ENCODE measurements at regions of chr20 and their contacts with region 1.

Region 1: GRCh38 chr20:2093159-2093781 is 8.4 kb upstream of the STK35 start:
- DNase-seq: peak; percentile 58
- H3K4me3 ChIP-seq: no peak overlapping the region
- H3K27ac ChIP-seq: no peak overlapping the region
- H3K4me1 ChIP-seq: peaks cover 5% of the 10 kb centered on the region
- CTCF ChIP-seq: peak; percentile 89

Region 2: DNA sequence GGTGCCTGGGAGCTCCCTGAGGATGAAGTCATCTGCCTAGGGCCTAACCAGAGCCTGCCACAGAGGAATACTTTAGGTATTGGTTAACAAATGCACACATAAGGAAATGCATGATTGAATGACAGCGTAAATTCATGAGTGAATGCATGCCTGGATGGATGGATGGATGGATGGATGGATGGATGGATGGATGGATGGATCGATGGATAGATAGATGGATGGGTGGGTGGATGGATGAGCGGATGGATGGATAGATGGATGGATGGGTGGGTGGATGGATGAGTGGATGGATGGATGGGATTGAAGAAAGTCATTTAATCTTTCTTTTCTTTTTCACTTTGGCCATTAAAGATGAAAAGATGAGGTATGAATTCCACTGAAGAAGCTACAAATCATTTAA is 323.8 kb before region 1 on chr20:
- CTCF ChIA-PET with region 1: no interaction called
- POLR2A ChIA-PET with region 1: no interaction called
- intact Hi-C with region 1: no loop called
- DNase-seq: no peak
- H3K4me3 ChIP-seq: no peak overlapping the region
- H3K27ac ChIP-seq: no peak overlapping the region
- H3K4me1 ChIP-seq: no peaks in the 10 kb centered on the region
- CTCF ChIP-seq: no peak

Region 3: GRCh38 chr20:1802385-1803060 is 290.7 kb before region 1 on chr20:
- CTCF ChIA-PET with region 1: no interaction called
- POLR2A ChIA-PET with region 1: no interaction called
- intact Hi-C with region 1: loop called (anchors 1 kb)
- DNase-seq: peak; percentile 52
- H3K4me3 ChIP-seq: no peak overlapping the region
- H3K27ac ChIP-seq: no peak overlapping the region
- H3K4me1 ChIP-seq: no peaks in the 10 kb centered on the region
- CTCF ChIP-seq: peak; percentile 85

Region 4: DNA sequence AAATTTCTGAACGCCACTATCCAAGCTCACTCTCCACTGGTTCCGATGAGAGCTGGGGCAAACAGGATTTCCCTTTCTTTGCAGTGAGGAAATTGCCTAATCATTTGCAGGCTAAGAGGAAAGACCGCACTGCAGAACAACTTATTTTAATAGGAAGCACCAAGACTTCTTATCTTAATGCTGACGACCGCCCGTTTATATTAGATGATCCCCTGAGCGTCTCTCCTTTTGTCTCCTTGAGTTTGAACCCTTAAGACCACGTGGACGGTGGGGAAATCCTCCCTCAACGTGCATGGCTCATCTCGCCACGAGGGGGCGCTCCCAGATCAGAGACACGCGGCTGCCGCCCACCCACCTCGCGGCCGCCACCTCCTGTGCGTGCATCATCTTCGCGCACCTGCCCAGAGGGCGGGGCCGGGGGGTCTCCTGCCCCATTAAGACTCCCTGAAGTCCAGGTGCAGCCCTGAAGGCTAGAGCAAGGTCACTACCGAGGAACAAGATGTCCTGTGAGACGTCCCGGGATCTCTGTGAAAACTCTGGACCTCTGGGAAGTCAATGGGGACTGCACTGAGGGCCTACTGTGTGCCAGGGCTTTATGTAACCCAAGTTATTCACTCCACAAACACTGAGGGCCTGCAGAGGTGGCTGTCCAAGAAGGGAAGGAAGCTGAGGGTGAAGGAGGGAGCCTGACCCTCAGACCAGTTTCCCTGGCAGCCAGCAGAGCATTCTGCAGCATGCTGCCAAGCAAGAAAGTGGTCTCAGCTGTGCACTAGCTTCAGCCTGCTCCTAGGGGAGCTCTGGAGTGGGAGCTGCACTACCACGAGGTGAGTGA is 127.5 kb before region 1 on chr20:
- CTCF ChIA-PET with region 1: no interaction called
- POLR2A ChIA-PET with region 1: no interaction called
- intact Hi-C with region 1: loop called (anchors 2 kb)
- DNase-seq: peak; percentile 86
- H3K4me3 ChIP-seq: no peak overlapping the region
- H3K27ac ChIP-seq: no peak overlapping the region
- H3K4me1 ChIP-seq: peaks cover 8% of the 10 kb centered on the region
- CTCF ChIP-seq: peak; percentile 98

Region 5: GRCh38 chr20:2005831-2006426 is 87.3 kb before region 1 on chr20:
- CTCF ChIA-PET with region 1: interaction called, 3 read pairs
- POLR2A ChIA-PET with region 1: no interaction called
- intact Hi-C with region 1: loop called (anchors 5 kb)
- DNase-seq: peak; percentile 56
- H3K4me3 ChIP-seq: no peak overlapping the region
- H3K27ac ChIP-seq: no peak overlapping the region
- H3K4me1 ChIP-seq: no peaks in the 10 kb centered on the region
- CTCF ChIP-seq: no peak

Measured in OCI-LY7 (cell line).